ENCODE measurements at regions of chr12 and their contacts with region 1.

Region 1: GRCh38 chr12:27821259-27821973 is 41.4 kb upstream of the MANSC4 start:
- DNase-seq: peak in 12 of 35 experiments; percentile 6 to 77 (median 12)
- ATAC-seq: peak in 1 of 4 experiments; percentile 35
- H3K4me3 ChIP-seq: peak overlapping the region in 1 of 2 donors; percentile 22
- H3K4me3 Mint-ChIP-seq: peak overlapping the region; percentile 48 to 76 (median 62)
- H3K27ac ChIP-seq: peak overlapping the region; percentile 53
- H3K27ac Mint-ChIP-seq: peak overlapping the region; percentile 77 to 90
- H3K4me1 ChIP-seq: peaks cover 0 to 9% of the 10 kb centered on the region in 2 experiments
- H3K4me1 Mint-ChIP-seq: peaks cover 11 to 41% (median 27%) of the 10 kb centered on the region in 3 donors
- H3K27me3 ChIP-seq: peaks cover 0 to 3% of the 10 kb centered on the region in 2 experiments
- H3K27me3 Mint-ChIP-seq: peaks cover 0 to 8% of the 10 kb centered on the region in 2 donors

Region 2: DNA sequence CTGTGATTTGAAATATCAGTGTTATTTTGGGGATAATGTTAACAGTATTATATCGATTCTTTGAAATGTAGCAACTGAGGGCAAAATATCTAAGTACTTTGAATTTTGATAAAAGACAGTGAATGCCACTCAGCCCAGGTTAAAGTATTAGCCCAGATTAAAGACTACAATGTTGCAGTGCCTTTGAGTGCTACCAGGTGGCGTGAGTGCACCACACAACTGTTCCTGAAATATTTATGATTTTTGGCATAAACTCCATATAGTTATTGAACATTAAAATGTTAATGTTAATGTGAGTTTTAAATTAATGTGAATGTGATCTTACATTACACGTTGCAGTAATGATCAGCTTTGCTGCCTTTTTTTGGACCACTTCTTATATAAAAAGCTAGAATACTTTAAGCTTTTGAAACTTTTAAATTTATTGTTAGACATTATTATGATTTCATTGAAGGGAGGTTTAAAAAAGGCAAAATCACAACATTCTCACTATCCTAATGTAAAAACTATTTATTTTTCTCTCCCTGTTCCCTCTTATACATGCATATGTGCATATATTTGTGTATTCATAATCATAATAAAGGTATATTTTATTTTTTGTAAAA is 88.3 kb before region 1 on chr12:
- CTCF ChIA-PET with region 1: interaction called, 22 to 52 read pairs
- POLR2A ChIA-PET with region 1: no interaction called
- DNase-seq: peak in 18 of 35 experiments; percentile 6 to 57 (median 22)
- ATAC-seq: no peak
- H3K4me3 ChIP-seq: no peak overlapping the region
- H3K4me3 Mint-ChIP-seq: no peak overlapping the region
- H3K27ac ChIP-seq: no peak overlapping the region
- H3K27ac Mint-ChIP-seq: no peak overlapping the region
- H3K4me1 ChIP-seq: no peaks in the 10 kb centered on the region
- H3K4me1 Mint-ChIP-seq: peaks cover 0 to 3% (median 0%) of the 10 kb centered on the region in 3 donors
- H3K27me3 ChIP-seq: no peaks in the 10 kb centered on the region
- H3K27me3 Mint-ChIP-seq: no peaks in the 10 kb centered on the region

Region 3: GRCh38 chr12:27779920-27780611 is 41.4 kb before region 1 on chr12 and contains the starts of genes KLHL42 and MANSC4:
- CTCF ChIA-PET with region 1: interaction called, 3 to 11 read pairs
- POLR2A ChIA-PET with region 1: interaction called in 1 of 2 experiments, 6 read pairs
- DNase-seq: peak; percentile 40 to 76 (median 58)
- ATAC-seq: peak; percentile 87 to 89 (median 88)
- H3K4me3 ChIP-seq: peak within 1 kb of the TSS; percentile 70 to 87
- H3K4me3 Mint-ChIP-seq: peak within 1 kb of the TSS; percentile 80 to 85 (median 83)
- H3K27ac ChIP-seq: no peak within 1 kb of the TSS
- H3K27ac Mint-ChIP-seq: peak within 1 kb of the TSS; percentile 75 to 82
- H3K4me1 ChIP-seq: peaks cover 11 to 29% of the 10 kb centered on the region in 2 experiments
- H3K4me1 Mint-ChIP-seq: peaks cover 35 to 42% (median 37%) of the 10 kb centered on the region in 3 donors
- H3K27me3 ChIP-seq: peaks cover 0 to 2% of the 10 kb centered on the region in 2 experiments
- H3K27me3 Mint-ChIP-seq: no peaks in the 10 kb centered on the region
- total RNA-seq, gene KLHL42: 16.5 to 28.0 (median 21.0) TPM
- total RNA-seq, gene MANSC4: not detected